Mammary epithelial cell (primary cell): ENCODE measurements at regions of chr9 and their contacts with region 1.

Region 1: GRCh38 chr9:134024828-134025605 is at the start of gene BRD3OS:
- DNase-seq: peak; percentile 97
- H3K4me3 ChIP-seq: peak within 1 kb of the TSS; percentile 56 to 84 (median 84)
- H3K27ac ChIP-seq: peak within 1 kb of the TSS; percentile 36
- H3K4me1 ChIP-seq: peaks cover 7% of the 10 kb centered on the region
- H3K27me3 ChIP-seq: no peaks in the 10 kb centered on the region
- CTCF ChIP-seq: no peak
- total RNA-seq, gene BRD3OS: 18.6 to 26.7 TPM

Region 2: DNA sequence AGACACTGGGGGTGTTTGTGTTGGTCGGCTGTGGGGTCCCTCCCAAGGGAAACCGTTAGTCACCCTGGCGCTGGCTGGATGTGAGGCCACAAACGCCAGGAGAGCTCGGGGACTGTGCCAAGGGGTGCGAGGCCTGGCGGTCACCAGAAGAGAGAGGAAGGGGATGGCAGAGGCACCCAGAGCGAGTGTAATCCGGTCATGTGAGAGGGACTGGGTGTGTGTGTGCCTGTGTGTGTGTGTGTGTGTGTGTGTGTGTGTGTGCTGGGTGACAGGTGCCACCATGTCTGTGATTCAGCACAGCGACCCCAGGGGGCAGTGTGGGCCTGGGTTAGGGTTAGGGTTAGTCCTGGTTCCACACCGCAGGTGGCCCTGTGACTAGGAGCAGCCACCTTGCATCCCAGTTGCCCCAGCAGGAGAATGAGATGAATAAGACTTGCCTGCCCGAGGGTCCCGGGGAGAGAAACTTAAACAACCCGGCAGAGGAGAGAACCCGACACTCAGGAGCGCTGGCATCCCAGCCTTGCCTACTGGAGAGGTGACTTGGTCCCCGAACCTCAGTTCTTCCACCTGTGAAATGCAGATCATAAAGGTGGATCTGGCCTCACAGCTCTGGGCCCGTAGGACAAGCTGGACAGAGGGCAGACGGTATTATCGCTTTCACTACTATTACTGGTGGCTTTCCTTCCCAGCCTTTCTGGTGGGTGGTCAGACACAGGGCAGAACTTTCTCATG is 491.9 kb before region 1 on chr9:
- CTCF ChIA-PET with region 1: no interaction called
- dilution Hi-C with region 1: no loop called
- in situ Hi-C with region 1: no loop called
- intact Hi-C with region 1: loop called (anchors 10 kb)
- DNase-seq: peak; percentile 20
- H3K4me3 ChIP-seq: no peak overlapping the region
- H3K27ac ChIP-seq: no peak overlapping the region
- H3K4me1 ChIP-seq: peaks cover 4% of the 10 kb centered on the region
- H3K27me3 ChIP-seq: peaks cover 12% of the 10 kb centered on the region
- CTCF ChIP-seq: peak; percentile 50 to 56

Region 3: DNA sequence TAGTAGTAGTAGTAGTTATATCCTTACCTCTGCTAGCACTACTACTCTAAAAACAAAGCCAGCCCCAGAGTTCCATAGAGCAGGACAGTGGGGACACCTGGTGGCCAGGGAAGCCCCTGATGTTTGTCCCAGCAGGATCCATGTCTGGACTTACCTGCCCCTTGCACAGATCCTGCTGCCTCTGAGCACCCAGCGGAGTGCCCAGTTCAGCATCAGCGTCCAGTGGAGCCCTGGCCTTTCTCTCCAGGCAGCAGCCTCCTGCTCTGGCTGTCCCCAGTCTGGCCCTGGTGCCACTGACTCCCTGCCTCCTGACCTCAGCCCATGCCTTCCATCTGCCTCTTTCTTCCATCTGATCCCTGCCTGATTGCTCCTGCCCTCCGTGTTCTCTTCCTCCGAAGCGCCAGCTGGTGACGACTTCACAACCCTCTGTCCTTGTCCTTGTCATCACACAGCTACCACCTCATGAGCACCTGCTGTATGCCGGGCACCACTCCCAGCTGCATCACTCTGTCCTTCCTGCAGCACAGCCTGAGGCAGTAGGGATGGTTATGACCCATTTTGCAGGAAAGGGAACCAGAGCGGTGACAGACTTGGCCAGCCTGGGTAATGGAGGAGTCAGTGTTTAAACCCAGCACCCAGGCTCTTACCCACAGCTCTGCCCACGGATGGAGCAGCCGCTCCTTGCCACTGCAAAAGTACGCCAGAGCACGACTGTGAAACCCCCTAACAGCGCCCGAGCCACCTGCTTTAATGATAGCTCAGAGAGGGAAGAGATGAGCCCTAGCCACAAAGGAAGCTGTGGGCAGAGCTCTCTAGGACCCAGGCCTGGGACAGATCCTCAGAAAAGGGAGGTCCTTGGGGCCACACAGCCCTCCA is 298.4 kb before region 1 on chr9:
- CTCF ChIA-PET with region 1: interaction called, 41 read pairs
- dilution Hi-C with region 1: no loop called
- in situ Hi-C with region 1: no loop called
- intact Hi-C with region 1: no loop called
- DNase-seq: peak; percentile 24
- H3K4me3 ChIP-seq: no peak overlapping the region
- H3K27ac ChIP-seq: no peak overlapping the region
- H3K4me1 ChIP-seq: no peaks in the 10 kb centered on the region
- H3K27me3 ChIP-seq: no peaks in the 10 kb centered on the region
- CTCF ChIP-seq: peak; percentile 30 to 67

Region 4: GRCh38 chr9:133792721-133793470 is 232.1 kb before region 1 on chr9:
- CTCF ChIA-PET with region 1: no interaction called
- dilution Hi-C with region 1: no loop called
- in situ Hi-C with region 1: no loop called
- intact Hi-C with region 1: loop called (anchors 10 kb)
- DNase-seq: peak; percentile 58
- H3K4me3 ChIP-seq: no peak overlapping the region
- H3K27ac ChIP-seq: no peak overlapping the region
- H3K4me1 ChIP-seq: peaks cover 9% of the 10 kb centered on the region
- H3K27me3 ChIP-seq: no peaks in the 10 kb centered on the region
- CTCF ChIP-seq: peak; percentile 77 to 90

Region 5: DNA sequence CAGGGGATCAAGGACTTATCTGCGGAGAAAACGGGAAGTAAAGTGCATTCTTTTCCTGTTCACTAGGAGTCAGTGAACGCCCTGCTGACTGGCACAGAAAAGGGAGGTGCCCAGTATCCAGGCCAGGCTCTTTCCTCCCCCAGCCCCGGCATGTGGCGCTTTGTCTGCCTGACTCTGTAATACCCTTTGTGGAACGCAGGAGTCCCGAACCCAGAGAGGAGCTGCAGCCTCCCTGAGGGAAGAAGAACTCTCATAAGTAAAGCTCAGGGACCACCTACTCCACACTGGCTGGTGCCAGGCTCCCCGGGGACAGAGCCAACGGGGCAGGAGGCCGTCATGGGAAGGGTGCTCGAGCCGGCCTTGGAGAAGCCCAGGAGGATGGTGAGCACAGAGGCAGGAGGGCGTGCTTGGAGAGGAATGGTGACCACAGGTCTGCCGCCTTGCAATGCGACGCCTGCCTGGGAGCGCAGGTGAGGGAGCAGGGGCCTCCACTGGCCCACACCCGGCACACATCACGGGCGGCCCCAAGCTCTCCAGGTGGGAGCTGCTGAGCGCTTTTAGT is 64.4 kb before region 1 on chr9:
- CTCF ChIA-PET with region 1: no interaction called
- dilution Hi-C with region 1: no loop called
- in situ Hi-C with region 1: no loop called
- intact Hi-C with region 1: loop called (anchors 10 kb)
- DNase-seq: no peak
- H3K4me3 ChIP-seq: no peak overlapping the region
- H3K27ac ChIP-seq: no peak overlapping the region
- H3K4me1 ChIP-seq: peaks cover 30% of the 10 kb centered on the region
- H3K27me3 ChIP-seq: no peaks in the 10 kb centered on the region
- CTCF ChIP-seq: no peak

Region 6: GRCh38 chr9:134067904-134068743 is 43.1 kb after region 1 on chr9 and contains the start of gene BRD3:
- CTCF ChIA-PET with region 1: interaction called, 11 read pairs
- dilution Hi-C with region 1: no loop called
- in situ Hi-C with region 1: no loop called
- intact Hi-C with region 1: loop called (anchors 1 kb)
- DNase-seq: peak; percentile 86
- H3K4me3 ChIP-seq: peak within 1 kb of the TSS; percentile 73 to 88 (median 75)
- H3K27ac ChIP-seq: peak within 1 kb of the TSS; percentile 67
- H3K4me1 ChIP-seq: peaks cover 7% of the 10 kb centered on the region
- H3K27me3 ChIP-seq: peaks cover 8% of the 10 kb centered on the region
- CTCF ChIP-seq: no peak
- total RNA-seq, gene BRD3: 3.3 to 17.3 TPM

Region 7: DNA sequence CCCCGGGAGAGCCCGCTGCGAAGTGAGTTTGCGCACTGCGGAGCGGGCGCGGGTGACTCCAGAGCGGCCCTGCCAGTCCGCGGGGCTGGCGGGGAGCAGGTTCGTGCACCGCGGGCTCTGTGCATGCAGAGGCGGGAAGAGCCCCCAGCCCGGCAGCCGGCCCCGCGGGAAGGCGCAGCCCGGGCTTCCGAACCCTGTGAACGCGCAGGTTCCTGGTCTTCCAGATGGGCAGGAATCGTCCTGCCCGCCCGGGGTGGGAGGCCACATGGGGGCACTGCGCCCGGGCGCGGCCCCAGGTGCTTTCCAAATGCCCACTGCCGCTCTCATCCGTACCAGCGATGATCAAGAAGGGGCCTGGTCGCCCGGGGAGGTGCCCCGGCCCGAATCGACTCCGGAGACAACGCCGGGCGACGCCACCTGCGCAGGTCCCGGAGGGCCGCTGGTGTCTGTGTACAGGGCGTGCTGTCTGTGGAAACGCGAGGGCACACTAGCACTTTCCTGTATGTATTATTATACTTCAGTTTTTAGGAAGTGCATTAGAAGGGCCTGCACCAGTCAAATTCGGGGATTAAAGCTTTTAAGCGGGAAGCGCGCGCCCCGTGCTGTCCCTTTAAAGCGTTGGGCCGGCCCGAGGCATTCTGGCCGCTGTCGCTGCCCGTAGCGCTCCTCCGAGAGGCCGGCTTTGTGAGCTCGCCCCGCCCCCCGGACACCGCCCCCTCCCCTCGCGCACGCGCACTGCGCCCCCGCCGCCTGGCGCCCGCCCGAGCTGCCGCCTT is 110.5 kb after region 1 on chr9 and contains the start of gene WDR5:
- CTCF ChIA-PET with region 1: no interaction called
- dilution Hi-C with region 1: no loop called
- in situ Hi-C with region 1: no loop called
- intact Hi-C with region 1: loop called (anchors 5 kb)
- DNase-seq: peak; percentile 84
- H3K4me3 ChIP-seq: peak within 1 kb of the TSS; percentile 84 to 95 (median 89)
- H3K27ac ChIP-seq: peak within 1 kb of the TSS; percentile 57
- H3K4me1 ChIP-seq: peaks cover 30% of the 10 kb centered on the region
- H3K27me3 ChIP-seq: no peaks in the 10 kb centered on the region
- CTCF ChIP-seq: peak in 1 of 2 donors; percentile 21
- total RNA-seq, gene WDR5: 22.3 to 37.9 TPM